Activated naive CD4-positive, alpha-beta T cell treated with anti-CD3 and anti-CD28 coated beads for 36 hours (primary cell): ENCODE measurements at regions of chr14 and their contacts with region 1.

Region 1: GRCh38 chr14:78530078-78530477 is 359.9 kb downstream of the NRXN3 start:
- DNase-seq: peak; percentile 40
- H3K4me3 Mint-ChIP-seq: no peak overlapping the region
- H3K27ac Mint-ChIP-seq: no peak overlapping the region
- H3K4me1 Mint-ChIP-seq: no peaks in the 10 kb centered on the region
- H3K27me3 Mint-ChIP-seq: no peaks in the 10 kb centered on the region

Region 2: DNA sequence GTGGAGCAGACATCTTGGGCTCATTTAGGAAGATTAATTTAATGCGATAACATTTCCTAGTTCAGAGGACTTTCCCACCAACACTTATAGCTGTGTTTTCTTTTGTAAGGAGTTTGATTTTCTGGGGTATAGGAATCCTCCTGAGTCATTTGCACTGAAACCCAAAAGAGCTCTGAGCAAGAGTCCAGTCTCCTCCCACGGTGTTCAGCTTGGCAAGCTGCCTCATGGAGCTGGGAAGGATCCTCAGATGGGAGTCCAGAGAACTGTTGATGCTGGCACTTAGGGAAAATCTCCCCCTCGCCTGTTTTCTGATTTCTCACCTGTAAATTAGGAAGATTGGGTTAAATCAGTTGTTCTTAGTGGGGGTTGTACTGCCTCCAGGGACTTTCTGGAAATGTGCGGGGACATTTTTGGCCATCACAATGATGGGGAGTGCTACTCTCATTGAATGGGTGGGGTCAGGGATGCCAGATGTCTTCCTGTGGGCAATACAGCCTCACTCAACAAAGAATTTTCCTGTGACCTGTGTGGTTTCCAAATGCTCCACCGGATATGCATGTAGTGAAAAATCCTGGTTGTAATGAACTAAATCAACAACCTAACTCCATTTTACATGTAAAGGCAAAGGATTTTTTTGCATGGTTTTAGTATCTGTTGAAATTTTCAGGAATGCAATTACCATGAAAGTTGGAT is 579.6 kb before region 1 on chr14:
- CTCF ChIA-PET with region 1: no interaction called
- intact Hi-C with region 1: no loop called
- DNase-seq: no peak
- H3K4me3 Mint-ChIP-seq: no peak overlapping the region
- H3K27ac Mint-ChIP-seq: no peak overlapping the region
- H3K4me1 Mint-ChIP-seq: no peaks in the 10 kb centered on the region
- H3K27me3 Mint-ChIP-seq: no peaks in the 10 kb centered on the region

Region 3: GRCh38 chr14:78519856-78520255 is 10.2 kb before region 1 on chr14:
- CTCF ChIA-PET with region 1: no interaction called
- intact Hi-C with region 1: loop called (anchors 1 kb)
- DNase-seq: peak; percentile 53
- H3K4me3 Mint-ChIP-seq: no peak overlapping the region
- H3K27ac Mint-ChIP-seq: no peak overlapping the region
- H3K4me1 Mint-ChIP-seq: no peaks in the 10 kb centered on the region
- H3K27me3 Mint-ChIP-seq: no peaks in the 10 kb centered on the region